ENCODE measurements at regions of chr1 and their contacts with region 1.

Region 1: GRCh38 chr1:92274939-92275338 is 23.8 kb downstream of the GLMN start:
- DNase-seq: no peak

Region 2: GRCh38 chr1:91997607-91998195 is 277.2 kb before region 1 on chr1:
- in situ Hi-C with region 1: loop called (anchors 25 kb)
- DNase-seq: peak; percentile 66

Region 3: DNA sequence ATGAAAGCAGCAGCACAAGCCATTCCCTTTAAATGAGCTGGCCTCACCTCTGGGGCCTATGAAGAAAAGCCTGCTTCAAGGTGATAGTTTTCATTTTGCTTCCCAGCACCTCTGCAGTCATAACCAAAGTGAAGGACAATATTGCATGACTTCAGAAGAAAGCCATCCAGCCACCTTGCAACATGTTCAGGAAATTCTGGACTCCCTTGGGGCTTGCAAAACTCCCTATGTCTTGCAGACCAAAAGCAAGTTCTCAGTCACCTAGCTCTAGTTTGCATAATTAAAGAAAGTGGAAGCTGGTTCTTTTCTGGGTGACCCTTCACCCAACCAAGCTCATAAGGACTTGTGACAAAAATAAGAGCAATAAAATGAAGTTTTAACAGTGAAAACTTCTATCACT is 124.1 kb after region 1 on chr1:
- in situ Hi-C with region 1: no loop called
- DNase-seq: no peak

Region 4: GRCh38 chr1:92728697-92729096 is 453.8 kb after region 1 on chr1:
- in situ Hi-C with region 1: no loop called
- DNase-seq: no peak

Measured in SK-MEL-5 (cell line).